ENCODE measurements at regions of chr15 and their contacts with region 1.

Region 1: GRCh38 chr15:38671675-38672254 is 107.2 kb upstream of the RASGRP1 start:
- DNase-seq: peak; percentile 35 to 69 (median 62)
- H3K4me3 ChIP-seq: peak overlapping the region; percentile 13
- H3K4me3 Mint-ChIP-seq: peak overlapping the region; percentile 6 to 75 (median 68)
- H3K27ac ChIP-seq: peak overlapping the region; percentile 62
- H3K27ac Mint-ChIP-seq: peak overlapping the region; percentile 95 to 100 (median 98)
- H3K4me1 ChIP-seq: peaks cover 75% of the 10 kb centered on the region
- H3K4me1 Mint-ChIP-seq: peaks cover 67 to 85% (median 82%) of the 10 kb centered on the region in 3 donors
- H3K27me3 ChIP-seq: no peaks in the 10 kb centered on the region
- H3K27me3 Mint-ChIP-seq: no peaks in the 10 kb centered on the region

Region 2: DNA sequence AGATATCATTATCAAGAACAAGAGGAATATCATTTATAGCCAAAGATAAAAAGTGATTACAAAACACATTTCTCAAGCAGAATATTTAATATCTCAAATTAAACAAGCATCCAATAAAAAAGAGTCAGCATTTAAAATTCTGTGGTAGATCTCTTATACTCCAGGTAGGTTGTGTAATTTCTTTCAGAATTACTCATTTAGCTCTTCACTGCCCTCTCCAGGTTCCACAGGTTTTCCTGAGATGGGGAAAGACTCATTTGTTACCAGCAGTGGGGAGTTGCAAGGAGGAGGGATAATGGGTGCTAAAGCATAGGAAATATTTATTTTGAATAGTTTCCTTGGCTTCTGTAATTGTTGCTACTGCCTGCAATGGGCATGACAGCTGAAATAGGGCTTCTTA is 24.1 kb before region 1 on chr15:
- CTCF ChIA-PET with region 1: interaction called, 94 read pairs
- POLR2A ChIA-PET with region 1: interaction called, 41 read pairs
- DNase-seq: no peak
- H3K4me3 ChIP-seq: no peak overlapping the region
- H3K4me3 Mint-ChIP-seq: peak overlapping the region in 1 of 7 donors; percentile 12
- H3K27ac ChIP-seq: no peak overlapping the region
- H3K27ac Mint-ChIP-seq: peak overlapping the region; percentile 50 to 87 (median 74)
- H3K4me1 ChIP-seq: peaks cover 80% of the 10 kb centered on the region
- H3K4me1 Mint-ChIP-seq: peaks cover 74 to 86% (median 84%) of the 10 kb centered on the region in 3 donors
- H3K27me3 ChIP-seq: no peaks in the 10 kb centered on the region
- H3K27me3 Mint-ChIP-seq: no peaks in the 10 kb centered on the region

Region 3: GRCh38 chr15:38683382-38684242 is 11.8 kb after region 1 on chr15:
- CTCF ChIA-PET with region 1: interaction called, 79 read pairs
- POLR2A ChIA-PET with region 1: interaction called, 15 read pairs
- DNase-seq: peak; percentile 49 to 80 (median 67)
- H3K4me3 ChIP-seq: no peak overlapping the region
- H3K4me3 Mint-ChIP-seq: peak overlapping the region; percentile 5 to 71 (median 40)
- H3K27ac ChIP-seq: no peak overlapping the region
- H3K27ac Mint-ChIP-seq: peak overlapping the region; percentile 12 to 97 (median 91)
- H3K4me1 ChIP-seq: peaks cover 64% of the 10 kb centered on the region
- H3K4me1 Mint-ChIP-seq: peaks cover 66 to 74% (median 71%) of the 10 kb centered on the region in 3 donors
- H3K27me3 ChIP-seq: no peaks in the 10 kb centered on the region
- H3K27me3 Mint-ChIP-seq: no peaks in the 10 kb centered on the region

Region 4: DNA sequence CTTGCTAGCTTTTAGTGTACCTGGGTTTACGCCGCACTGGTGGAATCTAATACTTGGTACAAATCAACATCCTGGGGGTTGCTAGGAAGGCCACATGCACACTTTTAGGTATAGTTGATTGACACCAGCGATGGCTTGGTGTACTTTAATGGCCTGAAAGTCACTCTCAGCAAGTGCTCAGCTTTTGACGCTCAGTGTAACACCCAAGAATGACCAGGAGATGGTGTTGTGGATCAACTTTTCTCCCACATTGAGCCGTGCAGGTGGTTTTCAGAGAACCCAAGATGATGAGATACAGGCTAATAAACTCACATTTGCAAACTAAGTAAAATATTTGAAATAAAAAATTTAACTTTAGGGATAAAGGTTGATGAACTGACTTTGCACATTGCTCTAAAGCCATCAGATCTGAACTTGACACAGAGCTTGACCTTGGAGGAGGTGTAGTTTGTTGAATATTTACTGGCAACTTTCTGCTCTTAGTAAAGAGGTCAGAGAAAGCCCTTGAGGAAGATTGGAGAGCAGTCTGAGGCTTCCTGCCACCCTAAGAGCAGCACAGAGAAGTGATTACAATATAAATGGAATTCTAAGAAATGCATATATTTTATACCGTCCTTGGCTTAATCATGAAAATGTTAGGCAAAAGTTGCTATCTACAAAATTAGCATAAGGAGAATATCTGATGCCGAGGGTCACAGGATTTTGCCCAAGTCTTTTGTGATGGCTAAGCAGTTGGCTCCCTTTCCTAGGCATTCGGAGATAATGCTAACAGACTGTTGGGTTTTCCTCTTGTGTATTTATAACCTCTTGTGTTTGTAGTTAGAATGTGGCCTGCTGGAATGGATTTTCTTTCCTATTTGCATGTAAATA is 36.3 kb after region 1 on chr15:
- CTCF ChIA-PET with region 1: no interaction called
- POLR2A ChIA-PET with region 1: no interaction called
- DNase-seq: peak in 2 of 5 donors; percentile 22 to 49
- H3K4me3 ChIP-seq: no peak overlapping the region
- H3K4me3 Mint-ChIP-seq: no peak overlapping the region
- H3K27ac ChIP-seq: no peak overlapping the region
- H3K27ac Mint-ChIP-seq: no peak overlapping the region
- H3K4me1 ChIP-seq: no peaks in the 10 kb centered on the region
- H3K4me1 Mint-ChIP-seq: peaks cover 0 to 7% (median 5%) of the 10 kb centered on the region in 3 donors
- H3K27me3 ChIP-seq: no peaks in the 10 kb centered on the region
- H3K27me3 Mint-ChIP-seq: peaks cover 1 to 8% of the 10 kb centered on the region in 2 donors